ENCODE measurements at regions of chr3 and their contacts with region 1.

Region 1: GRCh38 chr3:132399054-132399929 is 18.0 kb upstream of the DNAJC13 start:
- DNase-seq: peak in 4 of 5 donors; percentile 11 to 29 (median 22)
- H3K4me3 ChIP-seq: no peak overlapping the region
- H3K4me3 Mint-ChIP-seq: no peak overlapping the region
- H3K27ac ChIP-seq: no peak overlapping the region
- H3K27ac Mint-ChIP-seq: no peak overlapping the region
- H3K4me1 ChIP-seq: no peaks in the 10 kb centered on the region
- H3K4me1 Mint-ChIP-seq: no peaks in the 10 kb centered on the region
- H3K27me3 ChIP-seq: no peaks in the 10 kb centered on the region
- H3K27me3 Mint-ChIP-seq: peaks cover 2 to 5% of the 10 kb centered on the region in 2 donors

Region 2: DNA sequence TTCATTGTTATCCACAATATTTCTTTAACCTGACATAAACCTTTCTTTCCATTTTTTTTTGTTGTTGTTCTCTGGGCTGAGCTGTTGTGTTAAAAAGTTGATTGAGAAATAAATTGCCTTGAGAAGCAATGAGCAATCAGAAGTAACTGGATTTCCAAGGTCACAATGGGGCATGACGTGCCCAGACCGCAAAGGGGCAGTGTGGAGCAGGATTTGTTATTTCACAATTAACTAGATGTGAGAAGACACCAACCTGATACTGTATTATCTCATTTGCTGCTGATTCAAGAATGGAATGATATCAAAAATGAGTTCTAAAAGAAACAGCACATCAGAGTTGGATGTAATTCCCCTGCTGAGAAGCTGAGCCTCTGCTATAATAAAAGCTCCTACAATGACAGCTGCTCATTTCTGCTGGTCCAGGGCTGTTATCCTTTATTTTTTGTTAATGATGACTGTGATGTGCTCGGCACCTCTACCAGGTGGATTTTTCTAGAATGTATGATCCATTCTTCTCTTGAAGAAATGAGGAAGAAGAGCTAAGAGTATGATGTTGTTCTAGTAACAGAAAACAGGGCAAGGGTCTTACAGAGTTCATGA is 392.6 kb before region 1 on chr3:
- CTCF ChIA-PET with region 1: no interaction called
- POLR2A ChIA-PET with region 1: no interaction called
- intact Hi-C with region 1: loop called (anchors 5 kb)
- DNase-seq: no peak
- H3K4me3 ChIP-seq: no peak overlapping the region
- H3K4me3 Mint-ChIP-seq: no peak overlapping the region
- H3K27ac ChIP-seq: no peak overlapping the region
- H3K27ac Mint-ChIP-seq: no peak overlapping the region
- H3K4me1 ChIP-seq: no peaks in the 10 kb centered on the region
- H3K4me1 Mint-ChIP-seq: no peaks in the 10 kb centered on the region
- H3K27me3 ChIP-seq: no peaks in the 10 kb centered on the region
- H3K27me3 Mint-ChIP-seq: peaks cover 2 to 4% of the 10 kb centered on the region in 2 donors

Region 3: GRCh38 chr3:132253262-132253878 is 145.9 kb before region 1 on chr3:
- CTCF ChIA-PET with region 1: no interaction called
- POLR2A ChIA-PET with region 1: no interaction called
- intact Hi-C with region 1: loop called (anchors 5 kb)
- DNase-seq: peak in 4 of 5 donors; percentile 2 to 24 (median 4)
- H3K4me3 ChIP-seq: no peak overlapping the region
- H3K4me3 Mint-ChIP-seq: no peak overlapping the region
- H3K27ac ChIP-seq: no peak overlapping the region
- H3K27ac Mint-ChIP-seq: no peak overlapping the region
- H3K4me1 ChIP-seq: no peaks in the 10 kb centered on the region
- H3K4me1 Mint-ChIP-seq: no peaks in the 10 kb centered on the region
- H3K27me3 ChIP-seq: no peaks in the 10 kb centered on the region
- H3K27me3 Mint-ChIP-seq: peaks cover 4% of the 10 kb centered on the region in 2 donors

Region 4: DNA sequence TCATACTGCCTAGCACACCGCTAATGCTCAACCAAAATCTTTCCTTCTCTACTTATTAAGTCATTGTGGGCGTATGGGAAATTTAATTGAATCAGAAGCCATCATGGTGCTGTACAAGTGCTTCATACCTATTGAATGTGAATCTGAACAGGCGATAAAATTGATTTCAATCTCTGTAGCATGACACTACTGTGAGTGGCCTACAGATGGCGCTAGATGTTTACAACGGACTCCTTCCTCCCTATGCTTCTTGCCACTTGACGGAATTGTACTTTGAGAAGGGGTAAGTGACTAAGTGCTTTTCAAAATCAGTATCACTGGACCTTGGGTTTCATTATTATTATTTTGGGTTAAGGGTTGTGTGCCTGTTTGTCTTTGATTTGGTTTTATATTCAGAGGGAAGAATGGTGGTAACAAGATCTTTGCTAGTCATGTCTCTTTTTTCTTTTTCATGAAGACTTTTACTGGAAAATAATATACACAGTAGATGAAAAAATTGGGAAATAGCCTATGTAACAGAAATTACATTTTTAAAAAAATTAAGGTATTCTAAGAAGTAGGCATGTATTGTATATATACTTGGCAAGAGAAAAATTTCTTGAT is 46.6 kb before region 1 on chr3:
- CTCF ChIA-PET with region 1: interaction called, 10 read pairs
- POLR2A ChIA-PET with region 1: no interaction called
- intact Hi-C with region 1: loop called (anchors 1 kb)
- DNase-seq: peak; percentile 53 to 67 (median 60)
- H3K4me3 ChIP-seq: no peak overlapping the region
- H3K4me3 Mint-ChIP-seq: no peak overlapping the region
- H3K27ac ChIP-seq: no peak overlapping the region
- H3K27ac Mint-ChIP-seq: peak overlapping the region in 1 of 7 donors; percentile 60
- H3K4me1 ChIP-seq: no peaks in the 10 kb centered on the region
- H3K4me1 Mint-ChIP-seq: peaks cover 0 to 4% (median under 1%) of the 10 kb centered on the region in 4 donors
- H3K27me3 ChIP-seq: no peaks in the 10 kb centered on the region
- H3K27me3 Mint-ChIP-seq: peaks cover 3 to 10% of the 10 kb centered on the region in 2 donors

Measured in CD4-positive, alpha-beta memory T cell (primary cell).